ENCODE measurements at regions of chrX and their contacts with region 1.

Region 1: DNA sequence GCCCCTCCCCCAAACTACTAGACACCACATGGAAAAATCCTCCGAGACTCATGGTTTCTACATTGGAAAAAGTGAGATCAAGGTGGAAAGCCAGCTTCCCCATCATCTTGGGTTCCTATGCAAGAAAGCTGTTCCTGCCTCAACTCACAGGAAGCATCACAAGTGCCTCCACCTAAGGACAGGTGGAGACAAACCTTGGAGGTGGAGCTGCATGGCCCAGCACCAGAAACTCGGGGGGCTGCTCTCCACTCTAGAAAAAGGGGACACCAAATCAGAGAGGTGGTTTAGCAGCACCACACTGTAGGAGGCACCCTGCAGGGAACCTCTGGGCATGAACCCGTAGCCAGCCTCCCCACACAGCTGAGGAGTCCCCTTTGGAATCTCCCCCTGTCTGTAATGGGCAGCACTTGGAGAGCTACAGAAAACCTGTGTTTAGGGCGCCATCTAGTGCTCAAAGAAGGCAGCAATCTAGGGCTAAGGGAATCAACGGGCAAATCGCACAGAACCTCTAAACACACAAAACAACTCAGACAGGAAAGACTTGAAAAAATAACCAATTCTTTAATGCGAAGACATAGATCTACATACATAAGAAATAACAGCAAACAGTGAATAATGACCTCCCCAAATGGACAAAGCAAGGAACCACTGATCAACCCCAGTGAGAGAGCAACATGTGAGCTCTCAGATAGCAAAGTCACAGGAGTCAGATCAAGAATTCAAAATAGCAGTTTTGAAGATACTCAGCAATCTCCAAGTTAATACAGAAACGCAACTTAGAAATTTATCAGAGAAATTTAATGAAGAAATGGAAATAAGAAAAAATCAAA is 37.0 kb upstream of the ZBTB33 start:
- DNase-seq: peak; percentile 77
- ATAC-seq: peak; percentile 86
- H3K4me3 ChIP-seq: no peak overlapping the region
- H3K27ac ChIP-seq: no peak overlapping the region
- H3K4me1 ChIP-seq: no peaks in the 10 kb centered on the region
- H3K27me3 ChIP-seq: no peaks in the 10 kb centered on the region
- CTCF ChIP-seq: peak; percentile 82

Region 2: DNA sequence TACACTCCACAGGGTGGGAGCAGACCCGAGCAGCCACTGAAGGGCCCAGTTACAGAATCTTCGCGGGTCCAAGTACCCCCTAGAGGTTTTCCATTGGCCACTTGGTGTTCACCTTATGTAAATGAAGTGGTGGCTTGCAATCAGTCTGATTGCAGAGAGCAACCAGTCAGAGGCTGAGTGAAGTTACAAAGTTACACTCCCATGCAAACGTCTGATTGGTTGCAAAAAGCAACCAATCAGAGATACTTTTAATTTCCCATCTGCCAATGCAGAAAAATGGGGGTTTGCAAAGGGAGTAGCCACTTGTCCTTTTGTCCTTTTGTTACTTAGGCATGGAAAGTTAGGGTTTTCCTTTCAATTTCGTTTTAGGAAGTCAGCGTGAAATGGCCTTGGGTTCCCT is 243.1 kb before region 1 on chrX:
- CTCF ChIA-PET with region 1: no interaction called
- POLR2A ChIA-PET with region 1: no interaction called
- intact Hi-C with region 1: no loop called
- DNase-seq: no peak
- ATAC-seq: no peak
- H3K4me3 ChIP-seq: no peak overlapping the region
- H3K27ac ChIP-seq: no peak overlapping the region
- H3K4me1 ChIP-seq: no peaks in the 10 kb centered on the region
- H3K27me3 ChIP-seq: no peaks in the 10 kb centered on the region
- CTCF ChIP-seq: no peak

Region 3: DNA sequence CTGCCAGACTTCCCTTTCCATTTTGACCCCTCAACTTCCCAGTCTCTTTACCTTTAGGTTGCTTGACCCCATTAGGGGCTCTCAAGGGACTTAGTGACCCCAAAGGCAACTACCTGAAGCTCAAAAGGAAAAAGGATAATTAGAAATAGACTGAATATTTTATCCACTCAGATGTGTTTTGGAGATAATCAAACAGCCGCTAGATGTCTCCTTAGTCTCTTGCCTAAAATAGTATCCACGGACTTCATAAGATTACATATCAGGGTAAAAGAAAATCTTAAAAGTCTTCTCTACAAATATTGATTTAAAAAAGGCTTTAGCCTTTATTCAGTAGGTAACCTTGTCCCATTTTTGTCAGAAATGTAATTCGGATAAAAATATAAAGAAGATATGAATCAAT is 76.2 kb before region 1 on chrX:
- CTCF ChIA-PET with region 1: interaction called, 3 read pairs
- POLR2A ChIA-PET with region 1: no interaction called
- intact Hi-C with region 1: loop called (anchors 1 kb)
- DNase-seq: peak; percentile 19
- ATAC-seq: peak; percentile 59
- H3K4me3 ChIP-seq: peak overlapping the region; percentile 69
- H3K27ac ChIP-seq: no peak overlapping the region
- H3K4me1 ChIP-seq: no peaks in the 10 kb centered on the region
- H3K27me3 ChIP-seq: no peaks in the 10 kb centered on the region
- CTCF ChIP-seq: peak; percentile 63

Region 4: DNA sequence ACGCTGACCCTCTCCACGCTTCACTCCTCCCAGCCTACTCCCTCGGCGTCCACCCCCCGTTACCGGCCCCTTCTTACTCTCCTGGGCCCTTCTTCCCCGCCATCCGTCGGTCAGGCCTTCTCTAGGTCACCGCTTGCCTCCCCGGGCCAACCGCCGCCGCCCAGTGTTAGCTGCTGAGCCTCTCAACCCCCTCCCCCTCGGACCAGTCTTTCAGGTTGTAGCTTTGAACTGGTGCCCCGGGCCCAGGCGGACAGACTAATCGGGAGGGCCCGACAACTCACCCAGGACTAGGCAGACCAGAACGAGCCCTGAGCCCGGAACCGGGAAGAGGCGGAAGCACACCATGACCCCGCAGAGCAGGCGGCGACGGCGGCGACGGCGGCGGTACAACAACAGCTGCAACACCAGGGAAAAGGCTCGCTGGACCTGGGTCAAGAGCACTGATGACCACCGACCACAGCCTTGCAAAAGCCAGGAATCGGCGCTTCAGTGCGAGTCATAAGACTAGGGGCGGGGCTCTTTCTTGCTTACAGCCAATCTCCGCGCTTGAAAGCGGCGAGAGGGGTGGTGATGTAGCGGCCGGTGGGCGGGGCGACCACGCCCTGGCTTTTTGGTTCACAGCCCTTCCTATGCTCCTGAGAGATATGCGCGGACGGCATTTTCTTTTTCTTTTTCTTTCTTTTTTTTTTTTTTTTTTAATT is 255.3 kb after region 1 on chrX and contains the start of gene LAMP2:
- CTCF ChIA-PET with region 1: no interaction called
- POLR2A ChIA-PET with region 1: no interaction called
- intact Hi-C with region 1: no loop called
- DNase-seq: peak; percentile 89
- ATAC-seq: peak; percentile 90
- H3K4me3 ChIP-seq: peak within 1 kb of the TSS; percentile 87
- H3K27ac ChIP-seq: peak within 1 kb of the TSS; percentile 70
- H3K4me1 ChIP-seq: peaks cover 12% of the 10 kb centered on the region; the same call in 1 of the 2 replicates
- H3K27me3 ChIP-seq: no peaks in the 10 kb centered on the region
- CTCF ChIP-seq: no peak
- total RNA-seq, gene LAMP2: 51.5 and 53.8 TPM in 2 replicates

Measured in PC-3 (cell line).